Mammary epithelial cell (primary cell): ENCODE measurements at regions of chr7 and their contacts with region 1.

Region 1: DNA sequence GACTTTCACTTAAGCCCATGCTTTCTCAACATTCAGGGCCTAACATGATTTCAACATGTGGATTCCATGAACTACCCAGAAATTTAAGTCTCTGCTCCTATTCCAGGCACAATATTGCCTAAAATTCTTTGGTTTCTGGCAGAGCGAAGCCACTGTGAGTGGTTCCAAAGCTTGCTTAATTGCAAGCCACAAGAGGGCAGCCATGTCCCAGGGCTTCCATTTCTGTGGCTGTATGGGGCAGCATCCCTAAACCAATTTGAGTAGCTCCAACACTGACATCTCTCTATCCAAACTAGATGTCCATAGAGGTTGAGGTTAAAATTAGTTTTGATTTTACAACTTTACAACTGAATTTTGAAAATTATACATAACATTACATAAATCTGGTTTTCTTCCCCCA is 56.3 kb upstream of the MDFIC start:
- DNase-seq: peak; percentile 36
- H3K4me3 ChIP-seq: no peak overlapping the region
- H3K27ac ChIP-seq: no peak overlapping the region
- H3K4me1 ChIP-seq: no peaks in the 10 kb centered on the region
- H3K27me3 ChIP-seq: no peaks in the 10 kb centered on the region
- CTCF ChIP-seq: peak; percentile 67 to 91

Region 2: GRCh38 chr7:114364151-114364550 is 501.4 kb before region 1 on chr7:
- CTCF ChIA-PET with region 1: no interaction called
- dilution Hi-C with region 1: no loop called
- in situ Hi-C with region 1: no loop called
- intact Hi-C with region 1: no loop called
- DNase-seq: no peak
- H3K4me3 ChIP-seq: no peak overlapping the region
- H3K27ac ChIP-seq: no peak overlapping the region
- H3K4me1 ChIP-seq: no peaks in the 10 kb centered on the region
- H3K27me3 ChIP-seq: peaks cover 8% of the 10 kb centered on the region
- CTCF ChIP-seq: no peak

Region 3: DNA sequence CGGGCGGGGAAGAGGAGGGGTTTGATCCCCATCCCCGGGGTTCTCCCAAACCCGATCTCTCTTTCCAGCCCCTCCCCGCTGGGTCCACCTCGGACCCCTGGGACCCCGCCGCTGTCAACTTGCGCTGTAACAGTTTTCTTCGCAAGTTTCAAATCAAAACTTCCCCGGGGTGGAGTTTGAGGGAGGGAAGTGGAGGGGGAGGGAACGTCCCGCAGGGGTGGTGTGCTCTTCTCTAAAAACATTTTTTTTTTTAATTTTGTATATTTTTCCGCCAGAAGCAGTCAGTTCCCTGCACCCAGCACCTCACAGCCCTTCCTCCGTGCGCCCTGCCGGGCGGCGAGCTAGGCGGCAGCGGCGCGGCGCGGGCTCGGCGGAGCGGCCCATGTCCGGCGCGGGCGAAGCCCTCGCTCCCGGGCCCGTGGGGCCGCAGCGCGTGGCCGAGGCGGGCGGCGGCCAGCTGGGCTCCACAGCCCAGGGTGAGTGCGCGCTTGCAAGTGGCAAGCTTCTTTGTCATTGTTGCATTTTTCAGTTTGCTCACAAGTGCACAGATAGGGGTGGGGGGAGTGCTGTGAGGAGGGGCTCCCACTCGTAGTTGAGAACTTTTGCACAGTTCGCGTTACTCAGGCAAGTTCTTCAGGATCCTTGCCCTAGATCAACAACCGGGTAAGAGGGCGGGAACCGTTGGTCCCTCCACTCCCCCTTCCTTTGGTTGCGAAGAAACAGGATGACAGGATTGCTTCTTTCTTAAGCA is 57.3 kb after region 1 on chr7:
- CTCF ChIA-PET with region 1: interaction called, 3 read pairs
- dilution Hi-C with region 1: no loop called
- in situ Hi-C with region 1: no loop called
- intact Hi-C with region 1: loop called (anchors 1 kb)
- DNase-seq: peak; percentile 64
- H3K4me3 ChIP-seq: peak overlapping the region; percentile 64 to 97 (median 92)
- H3K27ac ChIP-seq: peak overlapping the region; percentile 72
- H3K4me1 ChIP-seq: no peaks in the 10 kb centered on the region
- H3K27me3 ChIP-seq: no peaks in the 10 kb centered on the region
- CTCF ChIP-seq: no peak

Region 4: GRCh38 chr7:115217373-115217772 is 351.8 kb after region 1 on chr7:
- CTCF ChIA-PET with region 1: interaction called, 4 read pairs
- dilution Hi-C with region 1: no loop called
- in situ Hi-C with region 1: loop called in 1 of 2 experiments (anchors 10 kb)
- intact Hi-C with region 1: loop called (anchors 1 kb)
- DNase-seq: no peak
- H3K4me3 ChIP-seq: no peak overlapping the region
- H3K27ac ChIP-seq: no peak overlapping the region
- H3K4me1 ChIP-seq: no peaks in the 10 kb centered on the region
- H3K27me3 ChIP-seq: no peaks in the 10 kb centered on the region
- CTCF ChIP-seq: peak in 1 of 2 donors; percentile 35

Region 5: DNA sequence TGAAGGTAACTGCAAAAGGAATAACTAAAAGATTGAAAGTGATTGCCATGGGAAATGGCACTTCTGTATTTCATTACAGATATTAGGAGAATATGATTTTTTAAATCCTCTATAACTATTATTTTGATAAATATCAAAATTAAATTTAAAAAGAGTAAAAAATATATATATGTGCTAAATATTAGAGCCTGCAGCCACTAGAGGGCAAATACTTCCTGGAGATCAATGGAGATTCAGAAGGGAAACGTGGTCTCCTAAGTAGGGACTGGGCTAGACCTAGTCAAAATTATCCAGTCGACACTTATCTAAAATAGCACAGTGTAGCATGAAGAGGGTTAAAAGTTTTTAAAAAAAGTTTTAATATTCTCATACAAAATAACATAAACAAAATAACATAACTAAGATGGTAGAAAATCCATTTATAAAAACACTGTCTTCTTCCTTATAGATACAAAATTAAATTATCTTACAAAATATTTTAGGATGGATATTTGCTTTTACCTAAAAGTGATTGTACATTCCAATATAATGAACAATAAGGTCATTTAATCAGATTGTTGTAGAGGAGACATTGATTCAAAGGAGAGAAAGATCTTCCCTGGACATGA is 490.7 kb after region 1 on chr7:
- CTCF ChIA-PET with region 1: no interaction called
- dilution Hi-C with region 1: no loop called
- in situ Hi-C with region 1: no loop called
- intact Hi-C with region 1: loop called (anchors 10 kb)
- DNase-seq: no peak
- H3K4me3 ChIP-seq: no peak overlapping the region
- H3K27ac ChIP-seq: no peak overlapping the region
- H3K4me1 ChIP-seq: peaks cover 9% of the 10 kb centered on the region
- H3K27me3 ChIP-seq: no peaks in the 10 kb centered on the region
- CTCF ChIP-seq: peak; percentile 44 to 54

Region 6: GRCh38 chr7:115613836-115614235 is 748.3 kb after region 1 on chr7:
- CTCF ChIA-PET with region 1: no interaction called
- dilution Hi-C with region 1: no loop called
- in situ Hi-C with region 1: no loop called
- intact Hi-C with region 1: no loop called
- DNase-seq: peak; percentile 1
- H3K4me3 ChIP-seq: no peak overlapping the region
- H3K27ac ChIP-seq: no peak overlapping the region
- H3K4me1 ChIP-seq: no peaks in the 10 kb centered on the region
- H3K27me3 ChIP-seq: no peaks in the 10 kb centered on the region
- CTCF ChIP-seq: no peak

Region 7: DNA sequence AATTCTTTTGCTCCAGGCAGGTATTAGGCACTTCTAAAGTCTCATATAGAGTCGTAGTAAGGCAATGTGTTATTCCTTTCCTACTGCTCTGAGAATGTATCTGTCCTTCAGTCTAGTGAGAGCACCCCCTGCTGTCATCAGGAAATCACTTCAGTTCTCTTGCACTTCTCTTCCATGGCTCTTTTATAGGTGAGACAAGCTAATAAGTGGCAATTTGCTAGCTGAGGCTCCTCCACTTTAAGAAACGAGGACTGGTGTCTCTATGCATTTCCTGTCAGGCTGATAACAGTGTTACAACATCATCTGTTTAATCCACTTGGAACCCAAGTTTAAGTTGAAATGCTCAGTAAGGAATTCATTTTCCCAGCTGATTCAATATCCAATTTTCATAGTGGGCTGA is 814.4 kb after region 1 on chr7:
- CTCF ChIA-PET with region 1: no interaction called
- dilution Hi-C with region 1: no loop called
- in situ Hi-C with region 1: loop called in 1 of 2 experiments (anchors 25 kb)
- intact Hi-C with region 1: loop called (anchors 1 kb)
- DNase-seq: peak; percentile 29
- H3K4me3 ChIP-seq: no peak overlapping the region
- H3K27ac ChIP-seq: no peak overlapping the region
- H3K4me1 ChIP-seq: no peaks in the 10 kb centered on the region
- H3K27me3 ChIP-seq: no peaks in the 10 kb centered on the region
- CTCF ChIP-seq: peak; percentile 65 to 68

Region 8: DNA sequence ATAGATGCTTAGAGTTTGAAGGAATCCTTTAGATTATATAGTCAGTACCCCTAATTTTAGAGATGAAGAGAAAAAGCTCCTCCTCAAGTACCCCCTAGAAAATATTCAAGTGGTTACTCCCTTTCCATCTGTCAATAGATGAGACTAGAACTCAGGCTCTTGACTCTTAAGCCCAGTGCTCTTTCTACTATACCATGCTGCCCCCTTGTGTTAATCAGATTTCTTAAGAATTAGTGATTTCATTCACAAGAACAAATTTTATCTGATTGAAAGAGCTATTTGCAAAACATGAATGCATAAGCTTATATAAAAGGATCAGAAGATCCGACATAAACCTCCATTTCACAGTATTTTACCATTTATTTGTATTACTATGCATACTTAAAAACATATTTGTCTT is 985.7 kb after region 1 on chr7:
- CTCF ChIA-PET with region 1: no interaction called
- dilution Hi-C with region 1: no loop called
- in situ Hi-C with region 1: no loop called
- intact Hi-C with region 1: loop called (anchors 5 kb)
- DNase-seq: peak; percentile 14
- H3K4me3 ChIP-seq: no peak overlapping the region
- H3K27ac ChIP-seq: no peak overlapping the region
- H3K4me1 ChIP-seq: no peaks in the 10 kb centered on the region
- H3K27me3 ChIP-seq: peaks cover 3% of the 10 kb centered on the region
- CTCF ChIP-seq: peak; percentile 33 to 43